CD4-positive, alpha-beta T cell (primary cell): ENCODE measurements at regions of chr14 and their contacts with region 1.

Region 1: GRCh38 chr14:59455411-59455810 is 9.8 kb downstream of the GPR135 start:
- DNase-seq: no peak
- ATAC-seq: no peak
- H3K4me3 ChIP-seq: no peak overlapping the region
- H3K4me3 Mint-ChIP-seq: no peak overlapping the region
- H3K27ac ChIP-seq: no peak overlapping the region
- H3K27ac Mint-ChIP-seq: no peak overlapping the region
- H3K4me1 ChIP-seq: no peaks in the 10 kb centered on the region
- H3K4me1 Mint-ChIP-seq: no peaks in the 10 kb centered on the region
- H3K27me3 ChIP-seq: no peaks in the 10 kb centered on the region
- H3K27me3 Mint-ChIP-seq: peaks cover 2% of the 10 kb centered on the region
- CTCF ChIP-seq: no peak

Region 2: DNA sequence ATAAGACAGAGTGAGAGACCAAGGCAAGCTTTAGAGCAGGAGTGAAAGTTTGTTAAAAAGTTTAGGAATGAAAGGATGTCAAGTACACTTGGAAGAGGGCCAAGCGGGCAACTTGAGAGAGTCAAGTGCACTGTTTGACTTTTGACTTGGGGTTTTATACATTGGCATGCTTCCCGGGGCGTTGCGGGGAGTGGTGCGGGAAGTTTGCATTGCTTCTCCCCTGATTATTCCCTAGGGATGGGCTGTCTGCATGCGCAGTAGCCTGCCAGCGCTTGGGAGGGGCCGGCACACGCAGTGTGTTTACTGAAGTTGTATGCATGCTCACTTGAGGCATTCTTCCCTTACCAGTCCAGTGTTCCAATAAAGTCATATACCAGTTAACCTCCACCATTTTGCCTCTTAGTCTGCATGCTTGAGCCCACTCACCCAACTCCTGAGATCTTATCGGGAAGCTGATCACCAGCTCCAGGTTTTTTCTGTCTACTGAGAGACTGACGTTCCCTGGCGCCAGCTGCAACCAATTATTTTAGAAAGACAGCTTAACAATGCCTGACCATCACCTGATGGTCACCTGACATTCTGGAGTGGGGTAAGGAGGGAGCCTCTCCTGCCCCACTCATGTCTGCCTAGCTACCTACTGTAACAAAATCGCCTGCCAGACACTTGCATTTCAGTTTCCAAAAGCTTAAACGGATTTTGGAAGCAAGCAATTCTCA is 764.5 kb before region 1 on chr14:
- CTCF ChIA-PET with region 1: no interaction called
- POLR2A ChIA-PET with region 1: no interaction called
- intact Hi-C with region 1: no loop called
- DNase-seq: no peak
- ATAC-seq: no peak
- H3K4me3 ChIP-seq: no peak overlapping the region
- H3K4me3 Mint-ChIP-seq: no peak overlapping the region
- H3K27ac ChIP-seq: no peak overlapping the region
- H3K27ac Mint-ChIP-seq: no peak overlapping the region
- H3K4me1 ChIP-seq: no peaks in the 10 kb centered on the region
- H3K4me1 Mint-ChIP-seq: no peaks in the 10 kb centered on the region
- H3K27me3 ChIP-seq: no peaks in the 10 kb centered on the region
- H3K27me3 Mint-ChIP-seq: no peaks in the 10 kb centered on the region
- CTCF ChIP-seq: no peak

Region 3: DNA sequence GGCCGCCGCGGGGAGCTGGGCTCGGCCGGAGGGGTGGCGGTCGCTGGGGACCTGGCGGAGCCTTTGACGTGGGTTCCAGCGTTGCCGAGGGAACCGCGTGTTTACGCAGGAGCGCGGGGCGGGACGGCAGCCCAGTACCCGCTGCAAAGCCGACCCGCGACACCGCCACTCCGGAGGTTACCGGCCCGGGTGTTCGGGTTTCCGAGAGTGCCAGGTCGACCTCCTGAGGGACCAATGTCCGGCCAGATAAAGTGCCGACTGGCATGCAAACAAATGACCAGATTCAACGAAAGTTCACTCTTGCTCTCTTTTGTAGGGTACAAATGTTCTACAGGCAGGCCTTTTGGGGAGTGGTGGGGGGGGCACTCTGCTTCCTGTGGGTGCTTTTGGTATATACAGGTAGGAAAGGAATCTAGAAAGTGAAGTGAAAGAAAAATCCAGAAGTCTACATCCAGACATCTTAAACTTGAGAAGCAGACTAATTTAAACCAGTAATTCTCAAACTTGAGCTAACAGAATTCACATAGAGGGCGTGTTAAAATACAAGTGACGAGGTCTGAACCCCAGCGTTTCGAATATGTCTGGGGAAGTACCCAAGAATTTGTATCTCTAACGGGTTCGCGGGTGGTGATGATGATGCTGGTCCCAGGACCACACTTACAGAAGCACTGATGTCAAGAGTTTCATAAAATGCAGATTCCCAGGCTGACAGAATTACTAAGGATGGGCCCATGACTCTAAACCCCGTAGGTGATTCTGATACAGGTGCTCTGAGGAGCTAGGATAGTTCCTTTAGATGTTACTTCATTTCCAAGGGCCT is 10.1 kb after region 1 on chr14 and contains the start of gene GPR135:
- CTCF ChIA-PET with region 1: no interaction called
- POLR2A ChIA-PET with region 1: no interaction called
- intact Hi-C with region 1: no loop called
- DNase-seq: peak in 13 of 14 experiments; percentile 8 to 79 (median 38)
- ATAC-seq: peak; percentile 39
- H3K4me3 ChIP-seq: peak within 1 kb of the TSS; percentile 56
- H3K4me3 Mint-ChIP-seq: peak within 1 kb of the TSS; percentile 94
- H3K27ac ChIP-seq: no peak within 1 kb of the TSS
- H3K27ac Mint-ChIP-seq: peak within 1 kb of the TSS; percentile 78
- H3K4me1 ChIP-seq: peaks cover 15% of the 10 kb centered on the region
- H3K4me1 Mint-ChIP-seq: peaks cover 8% of the 10 kb centered on the region
- H3K27me3 ChIP-seq: no peaks in the 10 kb centered on the region
- H3K27me3 Mint-ChIP-seq: peaks cover 7% of the 10 kb centered on the region
- CTCF ChIP-seq: no peak
- total RNA-seq, gene GPR135: 0.81 to 0.91 TPM

Region 4: DNA sequence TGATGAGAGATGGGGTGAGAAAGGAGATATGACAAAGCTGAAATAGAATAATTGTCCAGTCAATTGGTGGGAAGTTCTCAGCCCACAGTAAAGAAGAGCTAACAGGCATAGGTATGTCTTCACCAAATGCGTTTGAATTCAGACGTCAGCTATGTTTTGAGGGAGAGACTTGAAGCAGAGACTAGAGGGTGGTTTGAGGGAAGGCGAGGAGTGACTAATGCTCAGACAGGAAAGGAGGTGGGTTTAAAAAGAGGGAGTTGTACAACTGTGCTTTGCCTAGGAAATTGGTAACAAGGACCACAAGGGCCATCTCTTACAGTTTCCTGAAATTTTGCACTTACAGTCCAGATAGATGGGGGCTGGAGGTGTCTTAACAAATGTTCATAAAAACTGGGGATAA is 35.3 kb after region 1 on chr14:
- CTCF ChIA-PET with region 1: no interaction called
- POLR2A ChIA-PET with region 1: no interaction called
- intact Hi-C with region 1: loop called in 1 of 2 experiments (anchors 5 kb)
- DNase-seq: no peak
- ATAC-seq: no peak
- H3K4me3 ChIP-seq: no peak overlapping the region
- H3K4me3 Mint-ChIP-seq: no peak overlapping the region
- H3K27ac ChIP-seq: no peak overlapping the region
- H3K27ac Mint-ChIP-seq: no peak overlapping the region
- H3K4me1 ChIP-seq: peaks cover 7% of the 10 kb centered on the region
- H3K4me1 Mint-ChIP-seq: peaks cover 66% of the 10 kb centered on the region
- H3K27me3 ChIP-seq: no peaks in the 10 kb centered on the region
- H3K27me3 Mint-ChIP-seq: no peaks in the 10 kb centered on the region
- CTCF ChIP-seq: no peak